Psoas muscle (tissue), 8 donors: ENCODE measurements at regions of chr4 and their contacts with region 1.

Region 1: DNA sequence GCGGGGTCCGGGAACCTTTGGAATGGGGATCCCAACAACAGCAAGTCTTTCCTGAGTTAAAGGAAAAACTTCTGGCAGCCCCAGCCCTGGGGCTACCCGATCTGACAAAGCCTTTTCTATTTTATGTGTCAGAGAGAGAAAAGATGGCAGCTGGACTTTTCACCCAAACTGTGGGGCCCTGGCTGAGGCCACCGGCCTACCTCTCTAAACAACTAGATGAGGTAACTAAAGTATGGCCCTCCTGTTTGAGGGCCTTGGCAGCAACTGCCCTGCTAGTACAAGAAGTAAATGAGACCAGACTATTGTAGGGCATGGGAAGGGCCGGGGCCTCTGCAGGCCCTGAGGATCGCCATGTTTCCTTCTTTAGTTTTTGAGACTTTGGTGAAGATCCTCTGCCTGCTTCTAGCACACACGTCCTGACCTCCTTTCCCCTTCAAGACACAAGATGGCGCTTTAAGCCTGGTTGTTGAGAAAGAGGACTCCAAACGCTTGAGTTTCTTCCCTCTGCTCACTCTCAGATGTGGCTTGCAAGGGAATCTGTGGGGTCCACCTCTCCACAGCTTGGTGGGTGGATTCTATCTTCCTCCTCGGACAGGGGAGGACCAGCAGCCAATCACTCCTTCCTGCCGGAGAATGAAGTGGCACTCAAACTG is 18.5 kb upstream of the DRD5 start:
- DNase-seq: no peak
- ATAC-seq: no peak
- H3K4me3 ChIP-seq: no peak overlapping the region
- H3K27ac ChIP-seq: no peak overlapping the region
- H3K4me1 ChIP-seq: no peaks in the 10 kb centered on the region
- H3K27me3 ChIP-seq: peaks cover 0 to 17% (median 0%) of the 10 kb centered on the region in 3 donors
- CTCF ChIP-seq: peak; percentile 63

Region 2: GRCh38 chr4:9913846-9914245 is 150.9 kb after region 1 on chr4:
- intact Hi-C with region 1: no loop called
- DNase-seq: no peak
- ATAC-seq: no peak
- H3K4me3 ChIP-seq: no peak overlapping the region
- H3K27ac ChIP-seq: no peak overlapping the region
- H3K4me1 ChIP-seq: no peaks in the 10 kb centered on the region
- H3K27me3 ChIP-seq: no peaks in the 10 kb centered on the region
- CTCF ChIP-seq: no peak

Region 3: DNA sequence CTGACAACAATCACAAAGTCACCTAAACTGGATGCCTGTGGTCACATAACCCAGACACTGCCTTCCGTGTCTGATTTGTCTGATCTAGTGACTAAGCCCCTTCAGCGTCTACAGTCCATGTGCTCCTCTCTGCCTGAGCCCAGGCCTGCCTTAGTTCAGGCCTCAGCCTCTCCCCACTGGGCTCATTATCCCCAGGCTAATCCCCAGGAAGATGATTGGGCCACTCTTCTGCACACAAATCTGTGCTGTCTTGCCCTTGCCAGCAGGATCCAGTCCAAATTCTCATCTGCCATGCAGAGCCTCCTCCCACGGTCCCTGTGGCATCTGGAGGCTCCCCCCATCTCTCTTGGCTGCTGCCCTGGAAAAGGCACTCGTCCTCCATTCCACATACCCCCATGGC is 161.8 kb after region 1 on chr4:
- intact Hi-C with region 1: loop called in 1 of 2 experiments (anchors 10 kb)
- DNase-seq: no peak
- ATAC-seq: peak in 1 of 4 donors; percentile 44
- H3K4me3 ChIP-seq: no peak overlapping the region
- H3K27ac ChIP-seq: no peak overlapping the region
- H3K4me1 ChIP-seq: no peaks in the 10 kb centered on the region
- H3K27me3 ChIP-seq: no peaks in the 10 kb centered on the region
- CTCF ChIP-seq: no peak

Region 4: DNA sequence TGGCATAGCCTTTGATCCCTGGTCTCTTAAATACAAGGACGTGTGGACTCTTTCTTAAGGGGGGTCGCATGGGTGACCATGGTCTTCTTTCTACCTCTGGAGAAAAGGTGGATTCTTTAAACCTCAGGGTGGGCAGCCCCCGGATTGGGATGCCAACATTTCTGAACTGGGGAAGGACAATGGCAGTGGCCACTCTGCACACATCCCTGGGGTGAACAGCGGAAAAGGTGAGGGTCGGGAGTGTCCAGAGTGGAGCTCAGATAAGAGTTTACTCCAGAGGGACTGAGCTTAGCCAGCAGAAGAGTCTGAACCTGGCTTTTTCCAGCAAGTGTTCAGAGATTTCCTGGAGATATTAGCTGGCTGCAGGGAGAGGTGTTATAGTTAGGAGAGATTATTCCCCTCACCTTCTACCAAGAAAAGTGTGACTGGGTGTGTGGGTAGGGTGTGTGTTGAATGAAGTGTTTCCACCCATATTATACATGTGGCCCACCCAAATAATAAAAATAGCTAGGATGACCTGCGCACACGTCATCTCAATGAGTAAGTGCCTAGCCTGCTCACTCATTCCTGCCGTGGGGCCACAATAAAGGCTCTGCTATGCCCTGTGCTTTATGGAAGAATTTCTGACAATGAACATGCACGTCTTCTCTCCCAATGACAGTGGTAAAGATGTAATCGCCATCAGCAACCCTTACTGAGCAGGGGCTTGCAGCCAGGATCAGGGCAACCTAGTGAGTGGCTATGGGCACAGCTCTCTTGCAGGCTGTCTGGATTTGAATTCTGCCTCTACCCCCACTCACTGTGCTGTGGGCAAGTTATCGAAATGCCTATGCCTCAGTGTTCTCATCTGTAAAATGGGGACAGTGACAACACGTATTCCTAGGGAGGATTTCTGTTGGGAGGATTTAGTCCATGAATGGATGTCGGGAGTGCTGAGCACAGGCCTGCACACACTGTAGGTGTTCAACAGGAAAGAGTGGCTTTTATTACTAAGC is 181.8 kb after region 1 on chr4:
- intact Hi-C with region 1: no loop called
- DNase-seq: no peak
- ATAC-seq: no peak
- H3K4me3 ChIP-seq: no peak overlapping the region
- H3K27ac ChIP-seq: no peak overlapping the region
- H3K4me1 ChIP-seq: peaks cover 17% of the 10 kb centered on the region
- H3K27me3 ChIP-seq: no peaks in the 10 kb centered on the region
- CTCF ChIP-seq: no peak

Region 5: DNA sequence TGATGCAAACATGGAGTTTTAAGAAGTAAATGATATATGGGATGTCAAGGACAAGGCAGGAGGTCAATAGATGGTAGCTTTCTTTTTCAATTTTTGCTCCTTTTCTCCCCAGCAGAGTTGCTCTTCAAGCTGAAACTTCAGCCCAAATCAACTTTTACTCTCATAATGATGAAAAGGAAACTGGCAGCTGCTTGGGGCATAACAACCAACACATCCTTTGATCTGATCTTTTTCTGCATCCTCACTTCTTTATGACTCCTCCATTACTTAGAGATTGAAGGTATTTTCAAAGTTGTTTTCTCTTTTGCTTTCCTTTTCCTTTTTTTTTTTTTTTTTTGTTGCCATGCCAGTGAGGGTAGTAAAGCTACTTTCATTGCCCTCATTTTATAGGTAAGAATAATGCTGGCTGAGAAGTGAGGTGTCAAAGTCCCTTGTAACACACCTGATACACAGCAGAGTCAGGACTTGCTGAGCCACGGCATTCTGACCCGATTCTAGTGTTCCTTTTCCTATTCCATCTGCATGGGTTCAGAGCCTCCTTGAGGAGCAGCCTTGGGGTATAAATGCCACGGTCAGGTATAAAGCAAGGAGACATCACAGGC is 231.4 kb after region 1 on chr4:
- intact Hi-C with region 1: no loop called
- DNase-seq: no peak
- ATAC-seq: no peak
- H3K4me3 ChIP-seq: no peak overlapping the region
- H3K27ac ChIP-seq: no peak overlapping the region
- H3K4me1 ChIP-seq: no peaks in the 10 kb centered on the region
- H3K27me3 ChIP-seq: no peaks in the 10 kb centered on the region
- CTCF ChIP-seq: no peak

Region 6: GRCh38 chr4:10018818-10019461 is 256.0 kb after region 1 on chr4:
- intact Hi-C with region 1: loop called (anchors 2 to 5 kb)
- DNase-seq: peak; percentile 98
- ATAC-seq: peak; percentile 96 to 97 (median 96)
- H3K4me3 ChIP-seq: peak overlapping the region; percentile 62
- H3K27ac ChIP-seq: peak overlapping the region; percentile 80
- H3K4me1 ChIP-seq: peaks cover 24% of the 10 kb centered on the region
- H3K27me3 ChIP-seq: no peaks in the 10 kb centered on the region
- CTCF ChIP-seq: peak; percentile 97

Region 7: GRCh38 chr4:10063544-10064300 is 300.8 kb after region 1 on chr4:
- intact Hi-C with region 1: loop called (anchors 5 kb)
- DNase-seq: peak; percentile 67 to 76
- ATAC-seq: peak; percentile 84 to 98 (median 94)
- H3K4me3 ChIP-seq: no peak overlapping the region
- H3K27ac ChIP-seq: no peak overlapping the region
- H3K4me1 ChIP-seq: peaks cover 3% of the 10 kb centered on the region
- H3K27me3 ChIP-seq: no peaks in the 10 kb centered on the region
- CTCF ChIP-seq: peak; percentile 57

Region 8: DNA sequence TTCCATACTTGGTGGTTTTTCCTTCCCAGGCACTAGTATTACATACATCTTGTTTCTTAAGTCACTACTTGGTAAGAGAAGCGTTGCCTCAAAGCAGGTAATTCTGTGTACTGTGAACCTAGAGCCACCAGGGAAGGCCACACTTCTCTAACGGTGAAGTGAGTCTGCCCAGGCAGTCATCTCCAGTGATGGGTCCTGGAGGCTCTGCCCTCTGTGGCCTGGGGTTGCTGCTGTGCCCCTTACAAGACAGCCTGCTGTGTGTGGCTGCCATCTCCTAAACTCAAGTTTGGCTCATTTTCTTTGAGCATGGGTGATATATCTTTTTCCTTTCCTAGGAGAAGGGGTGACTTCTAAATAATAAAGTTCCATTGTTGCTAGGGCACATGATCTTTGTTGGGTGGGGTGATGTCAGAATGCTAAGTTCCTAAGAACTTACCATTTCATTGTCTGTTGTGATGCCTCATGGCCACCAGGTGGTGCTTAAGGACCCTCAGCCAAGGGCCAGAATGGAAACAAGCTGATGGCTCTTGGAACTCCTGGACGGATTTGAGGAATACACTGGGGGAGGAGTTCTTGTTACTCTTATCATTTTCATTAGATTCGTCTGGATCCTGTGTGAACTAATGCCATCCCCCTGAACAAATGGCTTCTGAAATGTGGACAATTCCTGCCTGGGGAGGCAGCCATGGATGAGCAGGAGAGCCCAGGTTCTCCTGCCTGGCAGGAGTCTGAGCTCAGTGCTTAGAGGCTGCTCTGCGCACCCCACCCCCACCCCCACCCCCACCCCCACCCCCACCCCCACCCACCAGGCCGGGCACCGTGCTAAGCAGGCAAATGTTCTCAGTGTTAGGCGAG is 394.8 kb after region 1 on chr4:
- intact Hi-C with region 1: loop called in 1 of 2 experiments (anchors 10 kb)
- DNase-seq: no peak
- ATAC-seq: peak; percentile 72 to 80 (median 74)
- H3K4me3 ChIP-seq: no peak overlapping the region
- H3K27ac ChIP-seq: no peak overlapping the region
- H3K4me1 ChIP-seq: no peaks in the 10 kb centered on the region
- H3K27me3 ChIP-seq: no peaks in the 10 kb centered on the region
- CTCF ChIP-seq: peak; percentile 77

Region 9: DNA sequence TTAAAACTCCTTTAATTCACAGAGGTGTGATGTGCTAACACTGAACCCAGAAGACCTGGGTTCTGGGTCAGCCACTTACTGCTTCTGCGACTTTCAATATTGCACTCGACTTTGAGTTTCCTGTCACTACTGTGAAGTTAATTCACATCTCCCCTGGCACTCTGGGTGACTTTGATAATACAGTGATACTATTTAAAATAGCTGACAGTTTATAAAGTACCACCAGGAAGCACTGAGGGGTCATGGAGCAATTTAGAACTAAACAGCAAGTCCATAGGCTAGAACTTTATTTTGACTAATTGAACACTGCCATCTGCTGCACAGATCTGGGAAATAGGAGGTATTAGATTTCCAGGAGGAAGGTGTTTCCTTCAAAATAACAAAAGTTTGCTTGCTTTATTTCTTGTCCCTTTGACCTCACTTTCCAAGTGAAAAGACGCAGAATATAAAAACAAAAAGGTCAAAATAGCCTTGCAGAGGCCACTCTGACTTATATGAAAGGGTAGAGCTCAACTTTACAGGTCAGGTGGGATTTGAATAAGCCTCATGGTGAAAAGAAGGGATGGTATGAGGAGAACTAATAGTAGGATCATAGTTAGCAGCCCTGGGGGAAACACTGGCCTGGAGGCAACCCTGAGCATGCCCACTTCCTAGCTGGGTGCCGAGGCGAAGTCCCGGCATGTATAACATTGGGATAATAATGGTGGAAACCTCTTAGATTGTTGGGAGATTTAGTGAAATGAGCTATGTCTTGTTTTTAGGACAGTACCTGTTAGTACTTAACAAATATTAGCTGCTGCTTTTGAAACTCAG is 640.9 kb after region 1 on chr4:
- intact Hi-C with region 1: loop called (anchors 10 kb)
- DNase-seq: no peak
- ATAC-seq: peak in 3 of 4 donors; percentile 53 to 73 (median 56)
- H3K4me3 ChIP-seq: no peak overlapping the region
- H3K27ac ChIP-seq: no peak overlapping the region
- H3K4me1 ChIP-seq: no peaks in the 10 kb centered on the region
- H3K27me3 ChIP-seq: no peaks in the 10 kb centered on the region
- CTCF ChIP-seq: peak; percentile 59